ENCODE measurements at regions of chr3 and their contacts with region 1.

Region 1: DNA sequence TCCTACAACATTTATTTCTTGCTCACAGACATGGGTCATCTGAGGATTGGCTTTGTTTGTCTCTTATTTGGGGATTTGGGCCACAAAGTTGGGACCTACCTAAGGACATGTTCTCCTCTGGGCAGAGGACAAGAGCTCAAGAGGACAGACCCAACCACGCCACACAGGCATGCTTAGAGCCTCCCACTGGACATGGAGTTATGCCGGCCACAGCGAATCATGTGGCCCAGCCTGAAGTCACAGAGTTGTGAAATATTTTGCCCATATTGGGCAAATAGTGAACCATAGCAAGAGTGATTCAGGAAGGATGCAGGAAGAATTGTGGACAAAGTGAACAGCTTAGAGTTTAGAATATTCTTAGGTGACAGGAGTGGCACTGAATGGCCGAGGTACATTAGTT is 9.9 kb downstream of the TRAK1 start:
- DNase-seq: no peak
- H3K4me3 Mint-ChIP-seq: no peak overlapping the region
- H3K27ac Mint-ChIP-seq: no peak overlapping the region
- H3K4me1 Mint-ChIP-seq: peaks cover 10% of the 10 kb centered on the region
- H3K27me3 Mint-ChIP-seq: no peaks in the 10 kb centered on the region

Region 2: GRCh38 chr3:41893977-41894376 is 207.1 kb before region 1 on chr3:
- CTCF ChIA-PET with region 1: interaction called, 40 read pairs
- POLR2A ChIA-PET with region 1: no interaction called
- intact Hi-C with region 1: loop called (anchors 1 kb)
- DNase-seq: no peak
- H3K4me3 Mint-ChIP-seq: no peak overlapping the region
- H3K27ac Mint-ChIP-seq: no peak overlapping the region
- H3K4me1 Mint-ChIP-seq: no peaks in the 10 kb centered on the region
- H3K27me3 Mint-ChIP-seq: no peaks in the 10 kb centered on the region

Region 3: GRCh38 chr3:41961750-41962679 is 139.0 kb before region 1 on chr3 and contains the start of gene ULK4:
- CTCF ChIA-PET with region 1: interaction called, 9 read pairs
- POLR2A ChIA-PET with region 1: no interaction called
- intact Hi-C with region 1: loop called (anchors 1 kb)
- DNase-seq: peak; percentile 98
- H3K4me3 Mint-ChIP-seq: peak within 1 kb of the TSS; percentile 90
- H3K27ac Mint-ChIP-seq: peak within 1 kb of the TSS; percentile 80
- H3K4me1 Mint-ChIP-seq: peaks cover 17% of the 10 kb centered on the region
- H3K27me3 Mint-ChIP-seq: peaks cover under 1% of the 10 kb centered on the region
- total RNA-seq, gene ULK4: 9.5 to 10.8 TPM

Region 4: GRCh38 chr3:42012935-42013690 is 87.9 kb before region 1 on chr3:
- CTCF ChIA-PET with region 1: interaction called, 26 read pairs
- POLR2A ChIA-PET with region 1: no interaction called
- intact Hi-C with region 1: loop called (anchors 1 kb)
- DNase-seq: peak; percentile 86
- H3K4me3 Mint-ChIP-seq: peak overlapping the region; percentile 82
- H3K27ac Mint-ChIP-seq: peak overlapping the region; percentile 90
- H3K4me1 Mint-ChIP-seq: peaks cover 43% of the 10 kb centered on the region
- H3K27me3 Mint-ChIP-seq: no peaks in the 10 kb centered on the region

Region 5: GRCh38 chr3:42085641-42086376 is 15.2 kb before region 1 on chr3:
- CTCF ChIA-PET with region 1: interaction called, 16 read pairs
- POLR2A ChIA-PET with region 1: no interaction called
- intact Hi-C with region 1: no loop called
- DNase-seq: no peak
- H3K4me3 Mint-ChIP-seq: peak overlapping the region; percentile 49
- H3K27ac Mint-ChIP-seq: peak overlapping the region; percentile 78
- H3K4me1 Mint-ChIP-seq: peaks cover 60% of the 10 kb centered on the region
- H3K27me3 Mint-ChIP-seq: no peaks in the 10 kb centered on the region

Region 6: GRCh38 chr3:42161050-42161935 is 60.2 kb after region 1 on chr3:
- CTCF ChIA-PET with region 1: no interaction called
- POLR2A ChIA-PET with region 1: no interaction called
- intact Hi-C with region 1: no loop called
- DNase-seq: no peak
- H3K4me3 Mint-ChIP-seq: no peak overlapping the region
- H3K27ac Mint-ChIP-seq: no peak overlapping the region
- H3K4me1 Mint-ChIP-seq: peaks cover 19% of the 10 kb centered on the region
- H3K27me3 Mint-ChIP-seq: no peaks in the 10 kb centered on the region